Activated naive CD4-positive, alpha-beta T cell treated with anti-CD3 and anti-CD28 coated beads for 36 hours (primary cell): ENCODE measurements at regions of chr6 and their contacts with region 1.

Region 1: DNA sequence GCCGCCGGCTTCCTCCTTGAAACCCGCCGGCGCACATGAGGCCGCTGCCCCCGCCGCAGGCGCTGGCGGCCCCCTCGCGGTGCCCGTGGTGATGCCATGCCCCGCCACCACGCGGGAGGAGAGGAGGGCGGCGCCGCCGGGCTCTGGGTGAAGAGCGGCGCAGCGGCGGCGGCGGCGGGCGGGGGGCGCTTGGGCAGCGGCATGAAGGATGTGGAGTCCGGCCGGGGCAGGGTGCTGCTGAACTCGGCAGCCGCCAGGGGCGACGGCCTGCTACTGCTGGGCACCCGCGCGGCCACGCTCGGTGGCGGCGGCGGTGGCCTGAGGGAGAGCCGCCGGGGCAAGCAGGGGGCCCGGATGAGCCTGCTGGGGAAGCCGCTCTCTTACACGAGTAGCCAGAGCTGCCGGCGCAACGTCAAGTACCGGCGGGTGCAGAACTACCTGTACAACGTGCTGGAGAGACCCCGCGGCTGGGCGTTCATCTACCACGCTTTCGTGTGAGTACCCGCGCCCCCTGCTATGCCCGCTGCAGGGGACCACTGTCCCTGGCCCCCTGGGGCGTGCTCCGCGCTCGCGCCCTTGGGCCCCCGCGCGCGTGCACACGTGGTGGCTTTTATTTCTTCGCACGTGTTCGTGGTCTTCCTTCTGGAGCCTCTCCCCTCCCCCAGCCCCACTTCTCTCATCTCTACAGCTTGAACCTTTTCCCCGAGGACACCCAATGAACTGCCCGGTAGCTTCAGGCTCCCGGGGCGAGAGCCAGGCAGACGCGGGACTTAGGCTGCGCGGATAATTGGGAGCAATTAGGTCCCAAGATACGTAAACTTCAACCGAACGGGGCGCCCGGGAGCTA is 453 bp downstream of the KCNQ5 start:
- DNase-seq: peak; percentile 57
- H3K4me3 Mint-ChIP-seq: peak overlapping the region; percentile 96
- H3K27ac Mint-ChIP-seq: peak overlapping the region; percentile 98
- H3K4me1 Mint-ChIP-seq: peaks cover 66% of the 10 kb centered on the region
- H3K27me3 Mint-ChIP-seq: no peaks in the 10 kb centered on the region

Region 2: DNA sequence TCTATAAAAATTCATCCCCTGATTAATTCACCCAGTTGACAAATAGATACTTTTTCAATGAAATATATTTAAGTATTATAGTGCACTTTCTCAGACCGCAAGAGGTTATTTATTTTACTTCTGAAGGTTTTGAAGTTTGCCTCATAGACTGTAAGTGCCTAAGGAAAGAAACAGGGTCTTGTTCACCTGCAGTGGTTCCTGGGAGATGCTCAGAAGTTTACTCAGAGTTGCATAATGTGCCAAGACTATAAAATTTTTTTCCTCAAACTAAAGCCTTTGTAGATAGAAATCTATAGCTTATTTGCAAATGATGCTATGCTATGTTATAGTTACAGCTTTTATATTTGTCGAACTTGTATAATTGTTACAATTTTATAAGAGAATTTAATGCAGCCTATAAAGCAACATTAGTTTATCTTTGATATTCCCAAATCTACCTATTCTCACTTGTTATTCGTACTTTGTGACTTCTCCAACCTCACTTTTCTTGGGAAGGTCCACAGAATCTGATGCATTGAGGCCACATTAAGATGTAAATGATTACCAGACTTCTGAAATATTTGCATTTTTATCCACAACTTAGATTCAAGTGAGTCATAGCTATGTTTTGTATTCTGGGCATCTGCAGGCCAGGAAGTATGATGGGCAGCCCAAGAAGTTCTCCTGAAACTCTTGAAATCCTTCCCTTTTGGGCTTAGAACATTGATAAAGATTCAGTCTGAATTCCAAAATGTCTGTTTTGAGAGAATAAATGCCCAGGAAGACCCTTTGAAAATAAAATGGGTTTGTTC is 35.3 kb after region 1 on chr6:
- CTCF ChIA-PET with region 1: no interaction called
- intact Hi-C with region 1: no loop called
- DNase-seq: no peak
- H3K4me3 Mint-ChIP-seq: no peak overlapping the region
- H3K27ac Mint-ChIP-seq: no peak overlapping the region
- H3K4me1 Mint-ChIP-seq: peaks cover 13% of the 10 kb centered on the region
- H3K27me3 Mint-ChIP-seq: no peaks in the 10 kb centered on the region

Region 3: GRCh38 chr6:72825315-72825911 is 203.1 kb after region 1 on chr6:
- CTCF ChIA-PET with region 1: interaction called, 3 read pairs
- intact Hi-C with region 1: loop called (anchors 1 kb)
- DNase-seq: no peak
- H3K4me3 Mint-ChIP-seq: no peak overlapping the region
- H3K27ac Mint-ChIP-seq: peak overlapping the region; percentile 13
- H3K4me1 Mint-ChIP-seq: peaks cover 39% of the 10 kb centered on the region
- H3K27me3 Mint-ChIP-seq: no peaks in the 10 kb centered on the region

Region 4: GRCh38 chr6:73145690-73146089 is 523.4 kb after region 1 on chr6:
- CTCF ChIA-PET with region 1: interaction called, 4 read pairs
- intact Hi-C with region 1: loop called (anchors 1 kb)
- DNase-seq: peak; percentile 48
- H3K4me3 Mint-ChIP-seq: no peak overlapping the region
- H3K27ac Mint-ChIP-seq: no peak overlapping the region
- H3K4me1 Mint-ChIP-seq: peaks cover 9% of the 10 kb centered on the region
- H3K27me3 Mint-ChIP-seq: no peaks in the 10 kb centered on the region

Region 5: GRCh38 chr6:73329201-73329600 is 706.9 kb after region 1 on chr6:
- CTCF ChIA-PET with region 1: no interaction called
- intact Hi-C with region 1: loop called (anchors 2 kb)
- DNase-seq: no peak
- H3K4me3 Mint-ChIP-seq: no peak overlapping the region
- H3K27ac Mint-ChIP-seq: no peak overlapping the region
- H3K4me1 Mint-ChIP-seq: no peaks in the 10 kb centered on the region
- H3K27me3 Mint-ChIP-seq: peaks cover 8% of the 10 kb centered on the region

Region 6: DNA sequence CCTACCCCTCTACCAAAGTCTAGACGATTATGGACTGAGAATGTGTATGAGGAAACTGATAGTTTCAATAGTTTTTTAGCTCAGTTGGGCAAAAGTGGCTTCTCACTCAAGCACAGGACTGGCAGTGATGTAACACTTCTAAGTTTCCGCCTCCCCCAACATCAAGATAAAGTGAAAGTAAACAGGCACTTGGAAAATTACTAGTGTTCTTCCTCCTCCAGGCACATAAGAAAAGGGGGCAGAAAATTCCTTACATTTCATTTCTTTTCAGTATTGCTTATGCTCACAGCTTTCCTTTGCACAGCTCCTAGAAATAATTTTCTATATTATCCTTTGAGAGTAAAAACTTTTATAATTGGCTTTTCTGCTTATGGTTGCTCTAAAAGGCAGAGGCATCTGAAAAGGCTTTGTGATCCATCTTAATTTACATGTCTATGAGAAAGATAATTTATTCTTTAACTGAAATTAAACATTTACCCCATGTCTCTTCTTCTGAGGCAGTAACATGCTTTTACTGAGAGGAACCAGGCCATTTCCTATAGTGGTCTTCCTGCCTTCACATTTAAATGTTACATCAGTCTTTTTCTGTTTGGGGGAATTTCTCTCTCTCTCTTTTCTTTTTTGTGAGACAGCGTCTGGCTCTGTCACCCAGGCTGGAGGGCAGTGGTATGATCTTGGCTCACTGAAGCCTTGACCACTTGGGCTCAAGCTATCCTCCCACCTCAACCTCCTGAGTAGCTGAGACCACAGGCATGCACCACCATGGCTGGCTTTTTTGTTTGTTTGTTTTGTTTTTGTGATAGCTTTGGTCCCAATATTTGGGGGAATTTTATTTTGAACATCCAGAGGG is 963.5 kb after region 1 on chr6:
- CTCF ChIA-PET with region 1: no interaction called
- intact Hi-C with region 1: loop called (anchors 1 kb)
- DNase-seq: peak; percentile 70
- H3K4me3 Mint-ChIP-seq: peak overlapping the region; percentile 78
- H3K27ac Mint-ChIP-seq: peak overlapping the region; percentile 99
- H3K4me1 Mint-ChIP-seq: peaks cover 36% of the 10 kb centered on the region
- H3K27me3 Mint-ChIP-seq: no peaks in the 10 kb centered on the region